A673 (cell line): ENCODE measurements at regions of chr14 and their contacts with region 1.

Region 1: GRCh38 chr14:32023540-32023939 is 53.6 kb upstream of the ARHGAP5 start:
- DNase-seq: no peak
- H3K4me3 ChIP-seq: no peak overlapping the region
- H3K27ac ChIP-seq: no peak overlapping the region
- H3K4me1 ChIP-seq: no peaks in the 10 kb centered on the region
- H3K27me3 ChIP-seq: no peaks in the 10 kb centered on the region
- CTCF ChIP-seq: no peak

Region 2: GRCh38 chr14:31380106-31380505 is 643.4 kb before region 1 on chr14:
- CTCF ChIA-PET with region 1: no interaction called
- POLR2A ChIA-PET with region 1: interaction called, 29 read pairs
- intact Hi-C with region 1: no loop called
- DNase-seq: no peak
- H3K4me3 ChIP-seq: no peak overlapping the region
- H3K27ac ChIP-seq: no peak overlapping the region
- H3K4me1 ChIP-seq: no peaks in the 10 kb centered on the region
- H3K27me3 ChIP-seq: no peaks in the 10 kb centered on the region
- CTCF ChIP-seq: no peak

Region 3: DNA sequence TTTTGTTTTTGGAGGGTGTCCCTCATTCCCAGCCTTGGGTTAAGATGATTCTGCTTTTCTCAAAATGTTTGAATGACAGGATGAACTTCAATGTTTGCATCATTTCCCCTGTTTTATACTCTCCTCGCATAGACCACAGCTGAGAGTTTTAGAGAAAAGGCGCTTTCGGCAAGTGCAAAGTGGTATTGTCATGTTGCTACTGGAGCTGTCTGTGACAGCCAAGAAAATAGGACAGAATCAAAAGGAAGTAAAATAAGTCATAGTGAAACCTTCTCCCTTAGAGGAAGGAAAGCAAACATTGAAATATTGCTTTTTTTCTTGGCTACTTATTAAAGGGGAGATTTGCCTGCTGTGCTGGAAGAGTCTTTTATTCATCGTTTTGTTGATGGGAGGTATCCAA is 20.1 kb after region 1 on chr14:
- CTCF ChIA-PET with region 1: no interaction called
- POLR2A ChIA-PET with region 1: no interaction called
- intact Hi-C with region 1: no loop called
- DNase-seq: no peak
- H3K4me3 ChIP-seq: no peak overlapping the region
- H3K27ac ChIP-seq: no peak overlapping the region
- H3K4me1 ChIP-seq: no peaks in the 10 kb centered on the region
- H3K27me3 ChIP-seq: no peaks in the 10 kb centered on the region
- CTCF ChIP-seq: no peak